Heart right ventricle (tissue), 16 donors: ENCODE measurements at regions of chr11 and their contacts with region 1.

Region 1: GRCh38 chr11:6833356-6833755 is 12.1 kb upstream of the OR10A5 start:
- DNase-seq: no peak
- ATAC-seq: no peak
- H3K4me3 ChIP-seq: no peak overlapping the region
- H3K27ac ChIP-seq: no peak overlapping the region
- H3K4me1 ChIP-seq: no peaks in the 10 kb centered on the region
- H3K27me3 ChIP-seq: peaks cover 0 to 2% (median 0%) of the 10 kb centered on the region in 7 donors
- CTCF ChIP-seq: no peak

Region 2: DNA sequence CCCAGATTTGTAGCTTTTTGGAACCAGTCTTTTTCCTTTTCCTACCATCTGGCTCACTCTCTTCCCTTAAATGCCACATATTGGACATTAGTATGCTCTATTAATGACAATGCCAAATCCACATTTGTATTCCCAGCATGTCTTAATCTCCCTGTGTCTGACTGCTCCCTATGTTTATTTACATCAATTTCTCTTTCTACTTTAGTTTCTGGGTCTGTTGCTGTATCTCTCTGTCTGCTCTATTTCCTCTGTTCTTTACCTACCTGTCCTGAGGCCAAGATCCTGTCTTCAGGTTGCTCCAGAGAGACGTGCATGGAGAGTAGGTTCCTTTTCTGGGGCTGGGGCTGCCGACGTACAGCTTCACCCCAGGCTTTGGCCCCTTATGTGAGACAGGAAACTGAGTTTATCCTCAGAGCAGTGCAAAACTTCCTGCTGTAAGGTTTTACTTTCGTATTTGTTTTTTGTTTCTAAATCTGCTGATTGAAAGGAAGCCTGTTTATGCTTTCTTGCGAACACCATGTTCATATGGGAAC is 87.2 kb before region 1 on chr11:
- intact Hi-C with region 1: no loop called
- DNase-seq: no peak
- ATAC-seq: peak in 6 of 8 donors; percentile 73 to 94 (median 89)
- H3K4me3 ChIP-seq: peak overlapping the region in 9 of 10 donors; percentile 30 to 56 (median 47)
- H3K27ac ChIP-seq: peak overlapping the region; percentile 61 to 92 (median 76)
- H3K4me1 ChIP-seq: peaks cover 0 to 56% (median 10%) of the 10 kb centered on the region in 9 donors
- H3K27me3 ChIP-seq: no peaks in the 10 kb centered on the region
- CTCF ChIP-seq: no peak

Region 3: DNA sequence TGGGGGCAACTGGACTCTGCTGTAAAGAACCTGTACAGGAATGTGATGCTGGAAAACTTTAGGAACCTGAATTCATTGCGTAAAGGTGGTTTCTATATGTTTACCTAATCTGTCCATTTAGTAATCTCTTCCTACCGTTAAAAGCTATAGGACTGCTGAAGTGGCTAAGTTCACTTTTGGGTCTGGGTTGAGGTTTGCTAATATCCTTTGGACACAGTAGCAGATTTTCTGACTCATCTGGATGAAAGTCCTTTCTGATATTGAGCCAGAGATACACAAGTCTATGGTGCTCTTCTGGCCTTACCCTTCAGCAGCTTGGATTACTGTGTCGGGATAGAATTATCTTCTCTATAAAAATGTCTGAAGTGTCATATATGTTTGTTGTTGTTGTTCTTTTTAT is 109.8 kb after region 1 on chr11:
- intact Hi-C with region 1: no loop called
- DNase-seq: no peak
- ATAC-seq: no peak
- H3K4me3 ChIP-seq: no peak overlapping the region
- H3K27ac ChIP-seq: no peak overlapping the region
- H3K4me1 ChIP-seq: no peaks in the 10 kb centered on the region
- H3K27me3 ChIP-seq: no peaks in the 10 kb centered on the region
- CTCF ChIP-seq: no peak

Region 4: DNA sequence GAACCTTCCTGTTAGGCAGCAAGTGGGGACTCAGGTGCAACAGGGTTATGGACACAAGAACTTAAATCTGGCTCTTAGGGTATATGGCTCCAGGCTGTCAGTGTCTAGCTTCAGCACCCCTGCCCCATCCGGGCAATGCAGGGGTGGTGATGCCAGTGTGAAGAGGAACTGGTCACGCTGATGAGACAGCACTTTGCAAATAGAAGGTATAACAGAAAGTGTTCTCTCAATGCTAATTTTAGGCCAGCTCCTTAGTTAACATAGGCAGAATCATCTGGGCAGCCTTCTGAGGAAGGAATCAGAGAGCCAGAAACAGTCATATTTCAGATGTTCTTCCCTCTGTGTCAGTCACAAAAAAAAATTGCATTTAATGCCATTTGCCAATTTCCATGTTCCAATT is 459.6 kb after region 1 on chr11:
- intact Hi-C with region 1: no loop called
- DNase-seq: no peak
- ATAC-seq: no peak
- H3K4me3 ChIP-seq: no peak overlapping the region
- H3K27ac ChIP-seq: no peak overlapping the region
- H3K4me1 ChIP-seq: no peaks in the 10 kb centered on the region
- H3K27me3 ChIP-seq: no peaks in the 10 kb centered on the region
- CTCF ChIP-seq: no peak

Region 5: DNA sequence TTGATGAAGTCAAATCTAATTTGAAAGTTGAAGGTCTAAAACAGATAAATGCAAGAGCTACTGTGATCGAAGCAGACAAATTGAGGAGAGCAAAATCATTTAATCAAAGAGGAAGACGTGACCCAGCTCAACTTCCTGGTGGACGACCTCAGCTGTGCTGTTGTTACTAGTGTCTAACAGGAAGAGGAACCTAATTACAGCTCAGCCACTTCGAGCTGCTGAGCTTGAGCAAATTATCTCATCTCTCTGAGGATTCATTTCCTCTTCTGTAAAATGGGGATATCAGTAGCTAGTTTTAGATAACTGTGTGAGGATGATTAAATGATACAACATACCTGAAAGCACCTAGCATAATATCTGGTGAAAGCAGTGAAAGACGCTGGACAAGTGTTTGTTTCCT is 603.3 kb after region 1 on chr11:
- intact Hi-C with region 1: loop called in 1 of 10 experiments (anchors 10 kb)
- DNase-seq: no peak
- ATAC-seq: peak in 5 of 8 donors; percentile 35 to 74 (median 46)
- H3K4me3 ChIP-seq: no peak overlapping the region
- H3K27ac ChIP-seq: peak overlapping the region in 1 of 10 donors; percentile 23
- H3K4me1 ChIP-seq: peaks cover 0 to 27% (median 0%) of the 10 kb centered on the region in 9 donors
- H3K27me3 ChIP-seq: no peaks in the 10 kb centered on the region
- CTCF ChIP-seq: no peak